ENCODE measurements at regions of chr1 and their contacts with region 1.

Region 1: GRCh38 chr1:234599617-234600417 is 10.2 kb downstream of the IRF2BP2 start:
- DNase-seq: peak; percentile 79 to 87
- H3K4me3 ChIP-seq: peak overlapping the region; percentile 23 to 63
- H3K27ac ChIP-seq: peak overlapping the region; percentile 99 to 100
- H3K4me1 ChIP-seq: peaks cover 19 to 22% of the 10 kb centered on the region in 2 donors
- H3K27me3 ChIP-seq: no peaks in the 10 kb centered on the region
- CTCF ChIP-seq: peak in 3 of 4 experiments; percentile 5 to 31 (median 20)
- POLR2A ChIP-seq: peak; percentile 43 to 92

Region 2: DNA sequence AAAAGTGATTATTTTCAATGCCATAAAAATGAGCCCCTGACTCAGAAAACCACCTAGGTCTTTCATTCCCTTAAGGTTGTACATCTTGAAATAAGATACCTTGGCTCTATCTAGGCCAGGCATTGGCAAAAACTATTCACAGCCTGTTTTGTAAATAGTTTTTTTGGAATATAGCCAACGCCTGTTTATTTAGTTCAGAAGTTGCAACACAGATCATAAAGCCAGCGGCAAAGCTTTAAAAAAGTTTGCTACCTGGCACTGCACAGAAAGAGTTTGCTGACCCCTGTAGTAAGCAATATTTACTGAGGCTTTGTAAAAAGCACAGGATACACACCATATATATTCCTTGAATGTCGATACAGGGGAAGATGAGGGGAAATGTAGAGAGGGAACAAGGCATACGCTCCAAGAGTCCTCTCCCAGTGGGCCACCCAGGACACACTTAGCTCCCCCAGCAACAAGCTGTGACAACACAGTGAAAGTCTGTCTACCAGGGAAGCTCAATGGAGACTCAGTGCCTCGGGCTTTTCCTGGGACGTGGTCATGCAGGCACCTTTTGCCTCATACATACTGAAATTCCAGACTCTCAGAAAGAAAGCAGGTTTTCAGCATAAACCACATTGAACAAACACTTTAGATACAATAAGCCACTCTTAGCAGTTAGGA is 141.3 kb before region 1 on chr1:
- intact Hi-C with region 1: no loop called
- DNase-seq: no peak
- H3K4me3 ChIP-seq: no peak overlapping the region
- H3K27ac ChIP-seq: no peak overlapping the region
- H3K4me1 ChIP-seq: no peaks in the 10 kb centered on the region
- H3K27me3 ChIP-seq: no peaks in the 10 kb centered on the region
- CTCF ChIP-seq: no peak
- POLR2A ChIP-seq: no peak

Region 3: GRCh38 chr1:234533975-234534876 is 65.6 kb before region 1 on chr1:
- intact Hi-C with region 1: loop called (anchors 10 kb)
- DNase-seq: peak; percentile 97 to 98
- H3K4me3 ChIP-seq: no peak overlapping the region
- H3K27ac ChIP-seq: peak overlapping the region; percentile 98 to 100
- H3K4me1 ChIP-seq: peaks cover 33 to 44% of the 10 kb centered on the region in 2 donors
- H3K27me3 ChIP-seq: no peaks in the 10 kb centered on the region
- CTCF ChIP-seq: no peak
- POLR2A ChIP-seq: no peak

Region 4: DNA sequence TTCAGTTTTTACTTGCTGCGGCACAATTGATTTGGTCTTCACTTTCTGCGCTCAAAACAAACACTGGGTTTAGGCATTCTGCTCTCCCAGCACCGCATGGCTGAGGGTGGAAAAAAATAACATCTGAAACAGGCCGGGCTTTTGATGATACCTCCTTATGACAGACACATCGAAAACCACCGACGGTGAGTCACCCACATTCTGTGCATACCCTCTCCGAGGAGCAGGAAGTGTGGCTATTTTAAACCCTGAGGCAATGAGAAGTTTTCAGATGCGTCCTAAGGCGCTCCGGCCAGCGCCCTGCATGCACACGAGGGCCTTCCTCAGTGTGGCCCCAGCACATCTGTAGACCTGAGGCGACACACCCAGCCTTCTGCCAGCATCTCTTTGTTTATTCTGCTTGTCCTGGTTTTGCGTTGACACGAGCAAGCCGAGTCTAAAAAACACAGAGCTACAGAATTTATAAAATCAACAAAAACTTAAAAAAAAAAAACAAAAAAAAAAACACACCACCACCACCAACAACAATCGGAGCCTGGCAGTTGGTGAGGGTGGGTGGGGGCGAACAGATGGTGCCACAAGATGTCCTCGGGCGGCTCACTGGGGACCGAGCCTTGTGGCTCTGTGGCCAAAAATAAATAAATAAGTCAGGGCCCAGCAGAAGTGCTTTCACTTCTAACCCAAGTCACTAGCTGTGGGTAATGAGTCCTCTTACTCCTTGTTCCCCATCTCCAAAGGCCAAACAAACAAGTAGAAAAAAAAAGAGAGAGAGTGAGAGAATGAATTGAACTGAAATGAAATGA is 172.7 kb after region 1 on chr1:
- intact Hi-C with region 1: no loop called
- DNase-seq: peak; percentile 54 to 75
- H3K4me3 ChIP-seq: no peak overlapping the region
- H3K27ac ChIP-seq: peak overlapping the region; percentile 9 to 16
- H3K4me1 ChIP-seq: no peaks in the 10 kb centered on the region
- H3K27me3 ChIP-seq: peaks cover 0 to 3% of the 10 kb centered on the region in 2 donors
- CTCF ChIP-seq: no peak
- POLR2A ChIP-seq: no peak